ENCODE measurements at regions of chr6 and their contacts with region 1.

Region 1: DNA sequence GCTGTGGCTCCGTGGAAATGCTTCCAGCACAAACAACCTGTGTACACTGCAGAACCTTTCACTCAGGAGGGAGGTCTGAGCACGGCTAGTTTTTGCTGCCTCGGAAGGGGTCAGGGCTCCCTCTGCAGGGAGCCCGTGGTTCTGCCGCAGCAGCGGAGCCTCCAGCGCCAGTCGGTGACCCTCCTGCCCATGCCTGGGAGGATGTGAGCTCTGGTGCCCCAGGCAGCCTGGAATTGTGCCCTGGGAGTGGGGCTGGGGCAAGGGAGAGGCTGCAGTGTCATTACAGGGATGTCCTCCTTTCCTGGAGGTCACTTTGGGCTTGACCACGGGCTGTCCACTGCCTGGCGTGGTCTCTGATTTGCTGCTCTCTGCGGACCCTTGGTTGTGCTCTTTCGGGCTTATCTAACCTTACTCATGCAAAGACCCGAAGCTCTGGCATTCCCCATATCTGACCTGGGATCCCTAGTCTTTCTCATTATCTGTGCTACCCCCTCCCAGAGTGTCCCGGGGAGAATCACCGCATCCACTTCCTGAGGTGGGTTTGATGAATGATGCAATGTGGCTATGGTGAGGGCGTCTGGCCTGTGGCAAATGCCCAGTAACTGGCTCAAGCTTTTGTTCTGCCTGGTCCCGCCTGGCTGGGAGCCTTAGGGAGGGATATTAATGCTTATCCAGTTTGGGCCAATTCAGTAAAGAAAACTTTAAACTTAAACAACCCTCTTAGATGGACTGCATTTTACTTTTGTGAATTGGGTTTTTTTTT is 59.6 kb upstream of the TAGAP start:
- DNase-seq: peak; percentile 86
- H3K4me3 ChIP-seq: peak overlapping the region in 1 of 2 experiments; percentile 19; a peak in 1 of 4 replicates
- H3K27ac ChIP-seq: no peak overlapping the region
- H3K4me1 ChIP-seq: peaks cover 0 to 4% of the 10 kb centered on the region in 2 experiments; a peak in 1 of 4 replicates
- H3K27me3 ChIP-seq: peaks cover 5% of the 10 kb centered on the region; the same call in 1 of the 2 replicates
- CTCF ChIP-seq: peak; percentile 81
- EP300 ChIP-seq: no peak
- RAD21 ChIP-seq: peak; percentile 87

Region 2: GRCh38 chr6:159008656-159009288 is 95.6 kb before region 1 on chr6:
- CTCF ChIA-PET with region 1: interaction called, 12 read pairs
- POLR2A ChIA-PET with region 1: no interaction called
- DNase-seq: peak; percentile 8
- H3K4me3 ChIP-seq: no peak overlapping the region
- H3K27ac ChIP-seq: no peak overlapping the region
- H3K4me1 ChIP-seq: peaks cover 0 to 7% of the 10 kb centered on the region in 2 experiments; a peak in 1 of 4 replicates
- H3K27me3 ChIP-seq: no peaks in the 10 kb centered on the region
- CTCF ChIP-seq: peak; percentile 58
- EP300 ChIP-seq: no peak
- RAD21 ChIP-seq: peak; percentile 50

Region 3: DNA sequence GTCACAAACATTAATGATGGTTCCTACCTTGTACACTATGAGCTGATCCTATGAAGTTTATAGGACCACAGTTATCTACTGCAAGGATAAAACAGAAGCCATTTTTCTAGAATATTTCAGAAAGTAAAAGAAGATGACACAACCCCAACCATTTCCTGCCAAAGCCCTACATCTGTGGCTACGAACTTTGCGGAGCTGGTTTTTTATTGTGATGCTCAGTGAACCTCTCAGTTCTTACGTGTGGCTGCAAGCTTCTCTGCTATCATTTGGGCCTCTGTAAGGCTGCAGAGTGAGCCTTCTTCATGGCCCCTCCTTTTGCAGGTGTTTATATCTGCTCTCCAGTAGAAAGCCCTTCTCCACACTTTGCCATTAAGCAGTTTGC is 41.8 kb before region 1 on chr6:
- CTCF ChIA-PET with region 1: interaction called, 11 read pairs
- POLR2A ChIA-PET with region 1: no interaction called
- DNase-seq: no peak
- H3K4me3 ChIP-seq: no peak overlapping the region
- H3K27ac ChIP-seq: no peak overlapping the region
- H3K4me1 ChIP-seq: no peaks in the 10 kb centered on the region
- H3K27me3 ChIP-seq: peaks cover 19% of the 10 kb centered on the region; the same call in 1 of the 2 replicates
- CTCF ChIP-seq: no peak
- EP300 ChIP-seq: no peak
- RAD21 ChIP-seq: no peak

Region 4: DNA sequence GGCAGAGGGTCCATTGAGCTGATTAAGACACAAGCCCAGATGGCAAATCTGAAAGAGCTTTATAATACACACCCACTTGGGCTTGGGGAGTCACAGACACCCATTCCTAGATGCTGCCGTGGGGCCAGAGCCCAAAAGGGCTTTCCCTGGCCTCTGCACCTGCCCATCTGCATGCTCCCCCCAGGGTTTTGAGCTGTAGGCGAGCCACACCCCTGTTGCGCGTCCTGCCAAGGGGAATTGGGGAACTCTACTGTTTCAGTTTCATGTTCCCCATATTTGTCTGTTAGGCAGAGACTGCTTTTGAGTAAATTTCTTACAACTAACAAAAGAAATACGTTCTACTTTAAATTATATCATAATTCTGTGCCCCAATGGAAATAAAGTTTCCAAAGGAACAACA is 12.0 kb after region 1 on chr6:
- CTCF ChIA-PET with region 1: interaction called, 16 read pairs
- POLR2A ChIA-PET with region 1: no interaction called
- DNase-seq: no peak
- H3K4me3 ChIP-seq: no peak overlapping the region
- H3K27ac ChIP-seq: no peak overlapping the region
- H3K4me1 ChIP-seq: no peaks in the 10 kb centered on the region
- H3K27me3 ChIP-seq: peaks cover 16% of the 10 kb centered on the region; the same call in 1 of the 2 replicates
- CTCF ChIP-seq: no peak
- EP300 ChIP-seq: no peak
- RAD21 ChIP-seq: no peak

Region 5: DNA sequence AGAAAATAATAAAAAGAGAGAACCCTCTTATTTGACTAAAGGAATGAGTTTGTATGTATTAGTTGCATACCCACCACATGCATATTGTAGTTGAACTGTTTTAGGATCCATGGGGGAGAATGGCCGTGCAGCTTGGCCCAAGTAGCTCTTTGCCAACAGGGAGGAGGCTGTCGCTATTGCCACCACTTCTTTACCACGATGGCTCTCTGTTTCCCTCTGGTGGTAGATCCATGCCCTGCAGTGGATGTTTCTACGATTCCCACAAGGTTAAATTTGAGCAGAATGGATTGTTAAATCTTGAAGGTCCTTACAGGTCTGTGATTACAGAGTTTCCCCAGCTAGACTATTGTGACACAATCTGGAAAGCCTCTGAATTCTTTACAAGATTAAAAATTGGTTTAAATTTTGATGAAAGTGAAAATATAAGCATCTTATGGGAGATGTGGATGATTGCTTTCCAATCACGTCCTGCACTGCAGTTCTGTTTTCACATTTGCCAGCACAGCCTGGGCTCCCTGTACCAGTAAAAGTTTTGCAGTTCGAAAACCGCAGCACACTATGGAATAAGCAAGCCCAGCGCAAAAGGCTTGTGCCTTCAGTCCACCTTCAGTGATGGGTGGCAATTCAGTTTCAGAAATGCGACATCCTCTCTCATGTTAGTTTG is 30.5 kb after region 1 on chr6:
- CTCF ChIA-PET with region 1: interaction called, 26 read pairs
- POLR2A ChIA-PET with region 1: no interaction called
- DNase-seq: peak; percentile 78
- H3K4me3 ChIP-seq: peak overlapping the region in 1 of 2 experiments; percentile 48; a peak in 1 of 4 replicates
- H3K27ac ChIP-seq: no peak overlapping the region
- H3K4me1 ChIP-seq: peaks cover 0 to 3% of the 10 kb centered on the region in 2 experiments; a peak in 1 of 4 replicates
- H3K27me3 ChIP-seq: peaks cover 21% of the 10 kb centered on the region; the same call in 1 of the 2 replicates
- CTCF ChIP-seq: peak; percentile 89
- EP300 ChIP-seq: no peak
- RAD21 ChIP-seq: peak; percentile 82